Sciatic nerve (tissue), 2 donors: ENCODE measurements at regions of chr2 and their contacts with region 1.

Region 1: DNA sequence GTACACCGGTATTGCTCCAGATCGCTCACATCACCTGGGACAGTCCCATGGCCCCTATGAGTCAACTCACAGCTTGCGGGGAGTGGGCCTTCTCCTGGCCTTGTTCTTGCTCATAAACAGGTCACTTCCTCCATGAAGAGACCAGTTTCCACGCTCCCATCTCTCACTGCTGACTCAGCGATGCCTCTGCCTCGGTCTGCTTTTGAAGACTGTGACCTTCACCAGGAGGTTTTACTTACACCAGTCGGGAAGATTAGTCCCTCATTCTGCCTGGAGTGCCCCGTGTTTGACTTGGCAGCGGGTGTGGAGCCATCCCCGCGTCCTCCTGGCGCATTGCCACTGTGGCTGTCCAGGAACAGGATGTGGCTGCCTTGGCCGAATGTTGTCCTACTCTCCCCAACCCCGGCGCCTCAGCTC is 159.8 kb downstream of the RHBDD1 start:
- DNase-seq: no peak
- ATAC-seq: no peak

Region 2: DNA sequence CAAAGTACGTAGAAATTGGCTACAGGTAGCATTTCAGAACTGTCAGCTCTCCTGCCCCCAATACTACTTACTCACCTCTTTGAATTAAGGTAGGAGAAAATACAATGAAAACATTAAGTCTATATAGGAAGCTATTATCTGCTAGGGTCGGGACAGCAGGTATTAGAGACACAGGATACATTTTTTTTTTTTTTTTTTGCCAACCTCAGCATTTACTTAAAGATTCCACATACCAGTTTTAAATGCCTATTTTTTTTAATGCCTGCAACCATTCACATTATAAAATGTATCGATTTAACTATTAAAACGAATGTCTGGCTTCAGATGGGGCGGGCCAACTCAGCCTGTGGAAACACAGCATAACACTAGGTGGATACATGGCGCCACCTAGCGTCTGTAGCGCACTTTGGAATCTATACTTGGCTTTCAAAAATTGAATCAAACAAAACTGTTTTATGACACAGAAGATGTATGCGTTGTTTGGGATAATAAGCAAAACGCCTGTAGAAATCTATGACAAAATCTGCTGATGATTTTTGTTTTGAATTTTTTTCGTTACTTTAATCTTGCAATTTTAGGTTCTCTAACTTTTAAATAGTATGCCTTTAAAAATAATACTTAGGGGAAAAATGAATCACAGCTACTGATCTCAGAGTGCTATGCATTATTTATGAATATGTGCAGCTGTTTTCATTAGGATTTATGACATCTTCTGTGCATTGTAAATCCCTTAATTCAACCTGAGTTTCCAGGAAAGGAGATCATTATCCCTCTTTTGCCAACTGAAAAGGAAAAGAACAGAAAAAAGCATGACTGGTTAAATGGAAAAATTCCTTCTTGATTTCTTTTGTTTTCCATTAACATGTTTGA is 1335.1 kb before region 1 on chr2:
- intact Hi-C with region 1: loop called (anchors 10 kb)
- DNase-seq: peak; percentile 87
- ATAC-seq: peak; percentile 60